Left colon (tissue), 2 donors: ENCODE measurements at regions of chr1 and their contacts with region 1.

Region 1: DNA sequence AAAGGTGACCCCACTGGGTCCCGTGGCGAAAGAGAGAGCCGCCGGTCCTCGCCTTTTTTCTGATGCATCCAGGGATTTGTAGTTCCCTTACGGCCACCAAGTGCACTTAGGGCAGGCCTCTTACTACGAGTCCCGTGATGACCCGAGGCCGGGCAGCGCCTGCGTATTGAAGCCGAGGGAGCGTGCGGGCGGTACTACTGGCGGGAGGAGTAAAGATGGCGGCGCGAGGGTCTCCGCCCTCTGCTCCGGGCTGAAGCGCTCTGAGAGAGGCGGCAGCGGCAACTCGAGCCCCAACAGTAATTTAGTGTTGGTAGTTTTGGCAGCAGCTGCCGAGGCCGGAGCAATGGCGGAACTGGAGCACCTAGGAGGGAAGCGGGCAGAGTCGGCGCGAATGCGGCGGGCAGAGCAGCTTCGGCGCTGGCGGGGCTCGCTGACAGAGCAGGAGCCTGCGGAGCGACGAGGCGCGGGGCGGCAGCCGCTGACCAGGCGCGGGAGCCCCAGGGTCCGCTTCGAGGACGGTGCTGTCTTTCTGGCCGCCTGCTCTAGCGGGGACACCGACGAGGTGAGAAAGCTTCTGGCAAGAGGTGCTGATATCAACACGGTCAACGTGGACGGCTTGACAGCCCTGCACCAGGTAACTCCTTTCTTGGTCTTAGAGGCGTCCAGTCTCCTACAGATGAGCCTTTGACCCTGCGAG is at the start of gene PPP1R12B:
- DNase-seq: peak; percentile 96 to 98
- ATAC-seq: peak; percentile 97
- total RNA-seq, gene PPP1R12B: 71.0 to 104 TPM

Region 2: DNA sequence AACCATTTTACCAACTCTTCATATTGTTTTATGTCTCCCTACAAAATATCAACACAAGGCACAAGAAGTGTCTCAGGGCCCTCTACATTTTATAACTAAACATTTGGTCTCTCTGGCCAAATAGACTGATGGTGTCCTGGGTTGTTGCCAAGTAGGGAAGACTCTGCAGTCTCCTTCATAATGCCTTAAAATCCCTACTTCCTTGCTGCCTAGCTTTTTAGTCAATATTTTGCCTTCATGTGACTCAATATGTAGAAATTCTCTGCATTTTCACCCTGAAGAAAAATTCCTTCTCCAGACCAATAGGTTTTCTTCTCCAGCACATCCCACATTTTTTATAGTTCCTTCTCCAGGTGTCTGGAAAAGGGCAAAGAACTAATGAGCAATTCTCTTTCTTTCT is 592.3 kb before region 1 on chr1:
- intact Hi-C with region 1: no loop called
- DNase-seq: no peak
- ATAC-seq: no peak

Region 3: DNA sequence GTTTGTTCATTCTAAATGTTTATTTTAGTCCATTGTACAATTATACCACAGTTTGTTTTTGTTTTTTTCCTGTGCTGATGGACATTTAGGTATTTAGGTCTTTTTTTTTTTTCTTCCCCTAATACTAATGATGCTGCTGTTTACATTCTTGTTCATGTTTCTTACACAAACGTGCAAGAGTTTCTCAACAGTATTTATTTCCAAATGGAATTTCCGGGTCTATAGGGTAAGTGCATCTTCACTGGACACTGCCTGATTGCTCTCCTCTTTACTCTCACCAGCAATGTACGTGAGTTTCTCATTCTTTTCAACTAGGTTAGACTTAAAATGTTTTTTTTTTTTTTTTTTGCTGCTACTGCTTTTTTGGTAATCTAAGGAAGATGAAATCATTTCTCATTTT is 122.6 kb after region 1 on chr1:
- intact Hi-C with region 1: no loop called
- DNase-seq: no peak
- ATAC-seq: no peak

Region 4: DNA sequence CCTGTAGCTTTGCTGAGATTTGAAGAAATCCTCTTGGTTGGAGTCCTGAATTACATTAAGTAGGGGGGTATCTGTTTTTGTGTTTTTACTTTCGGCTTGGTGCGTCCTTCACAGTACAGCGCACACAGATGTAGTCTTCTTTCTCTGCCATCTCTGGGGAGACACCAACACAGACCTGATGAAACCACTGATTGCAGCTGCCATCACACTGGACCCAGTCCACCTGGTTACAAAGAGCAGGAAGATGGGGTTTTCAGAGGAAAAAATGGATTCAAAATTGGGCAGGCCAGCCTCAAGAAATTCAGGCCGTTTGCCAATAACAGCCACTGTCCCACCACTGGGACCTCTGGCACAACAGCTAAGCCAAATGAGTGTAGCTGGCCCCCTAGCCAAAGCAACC is 380.3 kb after region 1 on chr1:
- intact Hi-C with region 1: loop called in 1 of 2 experiments (anchors 10 kb)
- DNase-seq: no peak
- ATAC-seq: no peak